Head of caudate nucleus (tissue), 42 donors: ENCODE measurements at regions of chr11 and their contacts with region 1.

Region 1: DNA sequence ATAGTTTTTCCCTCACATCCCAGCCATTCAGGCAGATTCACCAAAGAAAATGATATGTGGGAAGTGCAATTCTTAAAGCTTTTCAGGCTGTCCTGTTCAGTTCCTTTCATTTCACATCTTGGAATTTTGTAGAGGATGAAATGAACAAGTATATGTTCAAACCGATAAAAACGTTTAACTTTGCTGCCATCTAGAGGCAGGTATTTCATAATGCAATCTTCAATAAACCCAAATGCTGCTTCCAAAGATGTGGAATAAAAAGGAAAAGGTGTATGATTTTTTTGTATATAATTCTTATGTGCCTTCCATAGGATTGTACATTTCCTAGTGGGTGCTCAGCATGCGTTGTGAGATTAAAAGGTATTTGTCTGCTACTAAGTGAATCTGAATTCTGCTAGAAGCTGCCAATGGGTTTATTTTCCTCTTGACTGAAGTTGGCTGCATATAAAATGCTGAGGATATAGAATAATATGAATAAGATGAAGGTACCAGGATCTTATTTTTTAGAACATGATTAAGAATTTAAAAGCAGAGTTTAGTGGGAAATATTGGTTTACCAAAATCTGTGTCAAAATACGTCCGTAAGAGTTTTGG is 199.3 kb downstream of the PGR start:
- DNase-seq: peak in 3 of 42 donors; percentile 5 to 63 (median 23)

Region 2: GRCh38 chr11:100575870-100576705 is 354.2 kb before region 1 on chr11:
- intact Hi-C with region 1: loop called (anchors 5 kb)
- DNase-seq: peak in 19 of 42 donors; percentile 9 to 70 (median 30)

Region 3: DNA sequence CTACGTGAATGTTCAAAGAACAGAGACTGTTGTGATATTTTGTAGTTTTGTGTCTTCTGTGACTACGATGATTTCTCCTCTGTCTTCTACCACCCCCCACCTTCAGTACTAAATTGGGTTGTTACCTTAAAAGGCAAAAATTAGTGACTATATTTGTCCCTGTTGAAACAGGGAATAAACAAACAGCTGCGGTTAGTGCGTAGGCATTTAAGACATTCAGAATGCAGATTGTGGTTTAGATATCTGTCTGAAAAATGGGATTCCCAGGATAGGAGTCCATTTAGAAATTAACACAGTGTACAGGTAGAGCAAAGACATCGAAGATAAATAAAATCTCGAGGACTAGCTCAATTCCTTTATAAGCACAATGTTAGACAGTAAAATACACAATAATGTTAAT is 258.8 kb before region 1 on chr11:
- intact Hi-C with region 1: no loop called
- DNase-seq: no peak

Region 4: DNA sequence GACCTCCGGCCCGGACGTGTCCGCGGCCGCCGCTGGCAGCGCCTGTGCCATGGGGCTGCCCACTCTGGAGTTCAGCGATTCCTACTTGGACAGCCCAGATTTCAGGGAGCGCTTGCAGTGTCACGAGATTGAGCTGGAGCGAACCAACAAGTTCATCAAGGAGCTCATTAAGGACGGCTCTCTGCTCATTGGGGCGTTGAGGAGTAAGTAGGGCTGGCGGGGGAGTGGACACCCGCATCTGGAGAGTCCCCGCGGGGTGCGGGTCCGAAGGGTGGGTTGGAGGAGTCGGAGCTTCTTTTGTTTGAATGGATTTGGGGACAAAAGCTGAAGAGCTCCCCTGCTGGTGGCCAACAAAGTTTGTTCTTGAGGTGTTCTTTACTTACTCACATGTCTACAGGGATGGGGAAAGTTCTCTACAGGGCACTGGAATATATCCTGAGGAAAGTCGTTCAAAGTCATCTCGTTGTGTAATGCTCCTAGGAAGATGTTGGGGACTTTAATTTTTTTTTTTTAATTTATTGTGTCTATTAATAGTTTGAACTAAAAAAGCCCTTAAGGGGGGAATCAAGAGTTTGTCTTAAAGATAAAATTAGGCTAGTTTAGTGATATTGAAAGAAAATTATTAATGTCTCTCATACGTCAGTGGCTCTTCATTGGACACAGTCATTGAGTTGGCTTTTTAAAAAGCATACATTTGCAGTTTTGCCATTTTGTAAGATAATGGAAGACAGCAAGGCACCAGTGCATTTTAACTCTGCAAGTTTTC is 242.5 kb before region 1 on chr11:
- intact Hi-C with region 1: loop called (anchors 10 kb)
- DNase-seq: peak in 37 of 42 donors; percentile 10 to 73 (median 32)

Region 5: DNA sequence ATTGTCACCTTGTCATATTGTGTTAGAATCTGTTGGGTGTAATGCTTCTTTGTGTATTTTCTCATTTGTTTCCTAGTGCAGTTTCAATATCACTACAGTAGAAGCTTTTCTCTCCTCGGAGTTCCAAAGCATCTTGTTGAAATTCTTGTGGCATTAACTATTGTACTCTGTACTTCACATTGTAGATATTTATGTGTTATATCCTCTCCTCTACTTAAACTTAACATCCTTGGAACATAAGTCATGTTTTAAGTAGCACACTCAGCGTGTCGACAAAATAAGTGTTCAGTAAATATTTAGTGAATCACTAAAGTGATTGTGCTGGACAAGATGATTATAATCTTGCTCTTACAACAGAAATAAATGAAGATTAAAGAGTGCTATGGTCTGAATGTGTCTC is 41.4 kb before region 1 on chr11:
- intact Hi-C with region 1: no loop called
- DNase-seq: no peak

Region 6: GRCh38 chr11:101063706-101064105 is 133.4 kb after region 1 on chr11:
- intact Hi-C with region 1: no loop called
- DNase-seq: no peak